Vagina (tissue), 2 donors: ENCODE measurements at regions of chr1 and their contacts with region 1.

Region 1: GRCh38 chr1:164563721-164564360 is 4.9 kb downstream of the PBX1 start:
- DNase-seq: no peak
- H3K4me3 ChIP-seq: peak overlapping the region; percentile 82 to 91
- H3K27ac ChIP-seq: peak overlapping the region; percentile 95
- H3K4me1 ChIP-seq: peaks cover 51% of the 10 kb centered on the region
- H3K27me3 ChIP-seq: no peaks in the 10 kb centered on the region
- CTCF ChIP-seq: no peak
- POLR2A ChIP-seq: no peak

Region 2: DNA sequence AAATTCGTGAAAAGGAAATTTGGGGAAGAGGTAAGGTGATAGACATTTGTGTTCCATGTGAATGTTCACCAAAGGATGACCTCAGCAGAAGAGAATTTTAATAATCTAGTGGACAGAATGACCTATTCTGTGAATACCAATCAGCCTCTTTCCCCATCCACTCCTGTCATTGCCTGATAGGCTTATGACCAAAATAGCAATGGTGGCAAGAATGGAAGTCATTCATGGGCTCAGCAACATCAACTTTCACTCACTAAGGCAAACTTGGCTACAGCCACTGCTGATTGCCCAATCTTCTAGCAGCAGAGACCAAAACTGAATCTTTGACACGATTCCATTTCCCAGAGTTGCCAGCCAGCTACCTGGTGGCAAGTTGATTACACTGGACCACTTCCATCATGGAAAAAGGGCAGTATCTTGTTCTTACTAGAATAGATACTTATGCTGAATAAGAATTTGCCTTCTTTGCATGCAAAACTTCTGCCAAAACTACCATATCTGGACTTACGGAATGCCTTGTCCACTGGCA is 353.6 kb before region 1 on chr1:
- intact Hi-C with region 1: no loop called
- DNase-seq: no peak
- H3K4me3 ChIP-seq: no peak overlapping the region
- H3K27ac ChIP-seq: no peak overlapping the region
- H3K4me1 ChIP-seq: no peaks in the 10 kb centered on the region
- H3K27me3 ChIP-seq: no peaks in the 10 kb centered on the region
- CTCF ChIP-seq: no peak
- POLR2A ChIP-seq: no peak

Region 3: GRCh38 chr1:164576291-164577271 is 12.7 kb after region 1 on chr1:
- intact Hi-C with region 1: loop called (anchors 2 kb)
- DNase-seq: no peak
- H3K4me3 ChIP-seq: peak overlapping the region; percentile 40 to 44
- H3K27ac ChIP-seq: peak overlapping the region; percentile 82
- H3K4me1 ChIP-seq: peaks cover 77% of the 10 kb centered on the region
- H3K27me3 ChIP-seq: no peaks in the 10 kb centered on the region
- CTCF ChIP-seq: no peak
- POLR2A ChIP-seq: no peak

Region 4: GRCh38 chr1:164726235-164726634 is 162.4 kb after region 1 on chr1:
- intact Hi-C with region 1: no loop called
- DNase-seq: peak in 1 of 2 donors; percentile 44
- H3K4me3 ChIP-seq: no peak overlapping the region
- H3K27ac ChIP-seq: no peak overlapping the region
- H3K4me1 ChIP-seq: peaks cover 44% of the 10 kb centered on the region
- H3K27me3 ChIP-seq: no peaks in the 10 kb centered on the region
- CTCF ChIP-seq: no peak
- POLR2A ChIP-seq: no peak